ENCODE measurements at regions of chr2 and their contacts with region 1.

Region 1: DNA sequence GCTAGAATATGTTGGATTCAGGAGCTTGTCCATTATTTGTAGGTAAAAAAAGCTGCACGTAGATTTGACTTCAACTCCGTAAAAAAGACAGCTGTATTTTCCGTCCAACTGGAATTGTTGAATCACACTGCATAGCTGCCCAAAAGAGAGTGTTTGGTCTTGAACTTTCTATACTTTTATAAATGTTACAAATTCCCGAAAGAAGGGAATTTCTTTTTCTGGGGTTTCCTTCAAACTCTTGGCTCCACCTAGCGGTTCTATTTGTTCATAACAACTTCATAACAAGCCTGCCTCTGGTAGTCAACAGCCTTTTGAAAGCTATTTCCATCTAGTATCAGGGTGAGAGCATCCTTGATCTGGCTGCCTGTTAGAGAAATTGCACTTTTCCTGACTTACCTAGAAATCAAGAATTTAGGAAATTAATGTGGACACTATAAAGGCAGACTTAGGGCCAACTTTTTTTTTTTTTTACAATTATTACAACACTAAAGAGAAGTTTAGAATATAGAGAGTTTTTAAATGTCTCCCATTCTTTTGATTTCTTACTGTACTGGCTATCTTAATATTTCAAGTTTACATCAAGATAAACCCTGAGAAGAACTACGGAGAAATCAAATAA is 48.1 kb downstream of the TMEM185B start:
- DNase-seq: peak; percentile 45 to 55 (median 50)
- H3K4me3 ChIP-seq: no peak overlapping the region
- H3K4me3 Mint-ChIP-seq: peak overlapping the region in 3 of 8 donors; percentile 4 to 69 (median 11)
- H3K27ac ChIP-seq: no peak overlapping the region
- H3K27ac Mint-ChIP-seq: peak overlapping the region in 6 of 7 donors; percentile 17 to 95 (median 58)
- H3K4me1 ChIP-seq: peaks cover 48% of the 10 kb centered on the region
- H3K4me1 Mint-ChIP-seq: peaks cover 23 to 51% (median 38%) of the 10 kb centered on the region in 4 donors
- H3K27me3 ChIP-seq: no peaks in the 10 kb centered on the region
- H3K27me3 Mint-ChIP-seq: no peaks in the 10 kb centered on the region

Region 2: DNA sequence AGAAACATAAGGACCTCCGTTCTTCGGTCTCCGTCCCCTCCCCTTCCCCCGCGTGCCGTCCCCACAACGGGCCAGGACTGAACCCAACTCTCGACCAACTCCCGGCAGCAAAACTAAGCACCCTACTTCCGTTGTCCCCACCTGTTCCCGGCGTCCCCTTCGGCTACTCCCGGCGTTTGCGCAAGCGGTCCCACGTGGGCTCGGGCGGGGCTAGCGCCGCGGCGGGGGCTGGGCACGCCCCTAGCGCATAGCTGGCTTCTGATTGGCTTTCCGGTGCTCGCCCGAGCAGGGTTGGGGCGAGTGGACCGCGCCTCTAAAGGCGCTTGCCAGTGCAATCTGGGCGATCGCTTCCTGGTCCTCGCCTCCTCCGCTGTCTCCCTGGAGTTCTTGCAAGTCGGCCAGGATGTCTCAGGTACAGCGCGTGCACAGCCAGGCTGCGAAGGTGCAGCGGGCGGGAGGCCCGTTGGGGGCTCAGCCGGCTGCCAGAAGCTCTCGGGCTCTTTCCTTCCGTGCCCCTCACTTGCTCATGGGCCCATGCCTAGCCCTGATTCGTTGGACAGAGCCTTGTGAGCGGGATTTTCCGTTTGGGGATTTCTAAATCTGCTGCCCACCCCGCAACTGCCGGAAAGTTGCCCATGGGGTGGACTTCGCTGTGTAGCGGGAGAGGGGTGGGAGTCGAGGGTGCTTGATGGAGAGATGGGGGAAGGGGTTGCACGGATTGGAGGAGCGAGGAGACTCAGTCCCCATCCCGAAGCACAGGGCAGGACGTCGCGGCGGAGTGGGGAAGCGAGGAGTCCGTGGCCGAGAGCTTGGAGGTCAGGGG is 808.2 kb before region 1 on chr2 and contains the starts of genes C2orf76 and DBI:
- CTCF ChIA-PET with region 1: interaction called, 3 read pairs
- POLR2A ChIA-PET with region 1: interaction called, 3 read pairs
- intact Hi-C with region 1: loop called (anchors 5 kb)
- DNase-seq: peak; percentile 89 to 90 (median 89)
- H3K4me3 ChIP-seq: peak within 1 kb of the TSS; percentile 95 to 97
- H3K4me3 Mint-ChIP-seq: peak within 1 kb of the TSS; percentile 94 to 99 (median 96)
- H3K27ac ChIP-seq: peak within 1 kb of the TSS; percentile 92
- H3K27ac Mint-ChIP-seq: peak within 1 kb of the TSS; percentile 89 to 98 (median 94)
- H3K4me1 ChIP-seq: peaks cover 31% of the 10 kb centered on the region
- H3K4me1 Mint-ChIP-seq: peaks cover 32 to 52% (median 40%) of the 10 kb centered on the region in 4 donors
- H3K27me3 ChIP-seq: no peaks in the 10 kb centered on the region
- H3K27me3 Mint-ChIP-seq: no peaks in the 10 kb centered on the region
- total RNA-seq, gene C2orf76: 8.8 to 9.6 TPM
- total RNA-seq, gene DBI: 44.7 to 51.5 TPM

Region 3: DNA sequence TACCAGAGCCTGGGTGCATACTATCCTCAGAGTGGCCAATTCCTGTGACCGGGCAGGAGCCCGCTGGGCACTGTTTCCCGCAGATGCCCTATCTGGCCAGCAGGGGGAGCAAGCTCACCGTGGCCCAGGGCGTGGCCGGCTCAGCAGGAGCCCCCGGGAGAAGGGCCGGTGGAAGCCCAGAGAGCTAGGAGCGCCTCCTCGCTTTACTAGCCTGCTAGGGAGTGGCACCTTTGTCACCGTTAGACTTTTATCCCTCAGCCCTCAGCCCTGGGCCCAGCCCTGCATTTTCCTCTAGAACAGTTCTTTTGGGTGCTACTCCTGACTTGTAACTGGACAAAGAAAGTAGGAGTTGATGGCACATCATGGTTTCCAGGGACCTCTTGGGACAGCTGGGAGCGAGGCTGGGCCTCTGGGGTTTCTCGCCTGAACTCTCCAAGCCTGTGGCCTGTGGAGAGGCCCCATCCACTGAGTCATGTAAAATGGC is 472.1 kb before region 1 on chr2:
- CTCF ChIA-PET with region 1: interaction called, 84 read pairs
- POLR2A ChIA-PET with region 1: interaction called, 4 read pairs
- intact Hi-C with region 1: loop called (anchors 1 kb)
- DNase-seq: peak in 4 of 5 donors; percentile 55 to 69 (median 60)
- H3K4me3 ChIP-seq: no peak overlapping the region
- H3K4me3 Mint-ChIP-seq: peak overlapping the region in 2 of 8 donors; percentile 15 to 20
- H3K27ac ChIP-seq: no peak overlapping the region
- H3K27ac Mint-ChIP-seq: peak overlapping the region in 2 of 7 donors; percentile 22 to 64
- H3K4me1 ChIP-seq: peaks cover 20% of the 10 kb centered on the region
- H3K4me1 Mint-ChIP-seq: peaks cover 1 to 23% (median 13%) of the 10 kb centered on the region in 4 donors
- H3K27me3 ChIP-seq: no peaks in the 10 kb centered on the region
- H3K27me3 Mint-ChIP-seq: no peaks in the 10 kb centered on the region

Region 4: DNA sequence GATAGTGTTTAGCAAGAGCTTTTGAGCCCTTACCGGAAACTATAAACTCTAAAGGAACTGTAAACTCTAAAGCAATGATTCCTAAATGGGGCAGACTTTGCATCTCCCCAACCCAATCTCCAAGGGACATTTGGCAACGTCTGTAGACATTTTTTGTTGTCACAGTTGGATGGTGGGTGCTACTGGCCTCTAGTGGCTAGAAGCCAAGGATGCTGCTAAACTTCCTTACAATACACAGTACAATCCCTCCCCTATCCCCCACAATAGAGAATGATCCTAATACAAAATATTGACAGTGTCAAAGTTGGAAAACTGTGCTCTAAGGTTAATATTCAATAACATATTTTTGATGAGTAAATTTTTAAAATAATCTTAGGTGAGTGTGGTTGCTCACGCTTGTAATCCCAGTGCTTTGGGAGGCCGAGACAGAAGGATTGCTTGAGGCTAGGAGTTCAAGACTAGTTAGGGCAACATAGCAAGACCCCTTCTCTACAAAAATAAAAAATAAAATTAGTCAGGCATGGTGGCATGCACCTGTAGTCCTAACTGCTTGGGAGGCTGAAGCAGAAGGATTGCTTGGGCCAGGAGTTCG is 348.6 kb before region 1 on chr2:
- CTCF ChIA-PET with region 1: interaction called, 3 read pairs
- POLR2A ChIA-PET with region 1: interaction called, 3 read pairs
- intact Hi-C with region 1: loop called (anchors 2 kb)
- DNase-seq: peak in 4 of 5 donors; percentile 38 to 49 (median 41)
- H3K4me3 ChIP-seq: no peak overlapping the region
- H3K4me3 Mint-ChIP-seq: no peak overlapping the region
- H3K27ac ChIP-seq: no peak overlapping the region
- H3K27ac Mint-ChIP-seq: peak overlapping the region in 2 of 7 donors; percentile 31 to 32
- H3K4me1 ChIP-seq: peaks cover 5% of the 10 kb centered on the region
- H3K4me1 Mint-ChIP-seq: peaks cover 27 to 54% (median 44%) of the 10 kb centered on the region in 4 donors
- H3K27me3 ChIP-seq: no peaks in the 10 kb centered on the region
- H3K27me3 Mint-ChIP-seq: no peaks in the 10 kb centered on the region

Region 5: DNA sequence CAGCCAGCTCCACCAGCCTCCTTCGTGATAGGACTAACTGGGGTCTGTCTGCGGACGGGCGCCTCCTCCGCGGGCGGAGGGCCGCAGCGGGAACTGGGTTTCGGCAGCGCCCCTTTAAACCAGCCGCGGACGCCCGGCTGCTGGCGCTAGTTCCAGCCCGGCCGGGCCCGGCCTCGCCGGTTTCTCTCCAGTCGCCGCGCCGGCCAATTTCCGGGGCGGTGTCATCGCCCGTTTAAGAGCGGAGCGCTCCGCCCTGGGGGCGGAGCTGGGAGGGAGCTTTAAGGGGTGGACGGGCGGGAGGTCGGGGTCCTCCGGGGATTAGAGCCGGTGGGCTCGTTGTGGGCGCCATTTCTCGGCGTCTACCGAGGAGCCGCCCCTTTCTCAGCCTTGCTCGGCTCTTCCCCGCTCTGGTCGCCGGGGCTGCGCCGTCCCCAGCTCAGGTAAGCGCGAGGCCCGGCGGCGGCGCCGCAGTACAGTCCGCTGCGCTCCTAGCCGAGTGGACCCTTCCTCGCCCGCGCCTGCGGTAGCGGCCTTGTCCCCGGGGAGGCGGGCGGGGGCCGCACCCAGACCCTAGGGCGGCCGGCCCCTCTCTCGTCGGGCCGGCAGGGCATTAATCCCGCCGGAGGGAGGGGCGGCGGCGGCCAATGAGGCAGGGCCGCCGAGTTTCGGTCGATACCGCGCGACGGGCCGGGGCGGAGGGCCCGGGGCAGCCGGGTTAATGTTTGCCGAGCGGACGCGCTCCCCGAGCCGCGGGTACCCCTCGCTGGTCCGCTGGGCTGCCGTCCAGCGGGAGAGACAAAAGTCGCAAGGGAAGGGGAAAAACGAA is 162.1 kb before region 1 on chr2 and contains the start of gene EPB41L5:
- CTCF ChIA-PET with region 1: interaction called, 7 read pairs
- POLR2A ChIA-PET with region 1: interaction called, 19 read pairs
- intact Hi-C with region 1: loop called (anchors 2 kb)
- DNase-seq: peak; percentile 63 to 74 (median 67)
- H3K4me3 ChIP-seq: peak within 1 kb of the TSS; percentile 52 to 76
- H3K4me3 Mint-ChIP-seq: peak within 1 kb of the TSS; percentile 82 to 87 (median 84)
- H3K27ac ChIP-seq: peak within 1 kb of the TSS; percentile 55
- H3K27ac Mint-ChIP-seq: peak within 1 kb of the TSS; percentile 0 to 86 (median 70)
- H3K4me1 ChIP-seq: peaks cover 15% of the 10 kb centered on the region
- H3K4me1 Mint-ChIP-seq: peaks cover 13 to 20% (median 15%) of the 10 kb centered on the region in 4 donors
- H3K27me3 ChIP-seq: no peaks in the 10 kb centered on the region
- H3K27me3 Mint-ChIP-seq: peaks cover 0 to 2% of the 10 kb centered on the region in 2 donors
- total RNA-seq, gene EPB41L5: 5.3 to 6.2 TPM

Region 6: DNA sequence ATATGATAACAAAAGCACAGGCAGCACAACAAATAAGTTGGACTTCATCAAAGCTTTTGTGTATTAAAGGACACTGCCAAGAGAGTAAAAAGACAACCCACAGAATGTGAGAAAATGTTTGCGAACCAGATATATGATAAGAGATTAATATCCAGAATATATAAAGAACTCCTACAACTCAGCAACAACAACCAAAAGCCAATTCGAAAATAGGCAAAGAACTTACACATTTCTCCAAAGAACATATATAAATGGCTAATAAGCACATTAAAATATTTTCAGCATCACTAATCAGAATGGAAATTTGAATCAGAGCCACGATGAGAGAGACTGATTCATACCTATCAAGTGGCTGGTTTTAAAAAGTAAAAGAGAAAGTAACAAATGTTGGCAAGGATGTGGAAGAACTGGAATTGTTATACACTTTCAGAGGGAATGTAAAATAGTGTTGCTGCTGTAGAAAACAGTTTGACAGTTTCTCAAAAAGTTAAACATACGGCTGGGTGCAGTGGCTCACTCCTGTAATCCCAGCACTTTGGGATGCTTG is 137.0 kb before region 1 on chr2:
- CTCF ChIA-PET with region 1: no interaction called
- POLR2A ChIA-PET with region 1: no interaction called
- intact Hi-C with region 1: no loop called
- DNase-seq: no peak
- H3K4me3 ChIP-seq: no peak overlapping the region
- H3K4me3 Mint-ChIP-seq: no peak overlapping the region
- H3K27ac ChIP-seq: no peak overlapping the region
- H3K27ac Mint-ChIP-seq: no peak overlapping the region
- H3K4me1 ChIP-seq: no peaks in the 10 kb centered on the region
- H3K4me1 Mint-ChIP-seq: peaks cover 0 to 3% (median under 1%) of the 10 kb centered on the region in 4 donors
- H3K27me3 ChIP-seq: no peaks in the 10 kb centered on the region
- H3K27me3 Mint-ChIP-seq: no peaks in the 10 kb centered on the region

Region 7: DNA sequence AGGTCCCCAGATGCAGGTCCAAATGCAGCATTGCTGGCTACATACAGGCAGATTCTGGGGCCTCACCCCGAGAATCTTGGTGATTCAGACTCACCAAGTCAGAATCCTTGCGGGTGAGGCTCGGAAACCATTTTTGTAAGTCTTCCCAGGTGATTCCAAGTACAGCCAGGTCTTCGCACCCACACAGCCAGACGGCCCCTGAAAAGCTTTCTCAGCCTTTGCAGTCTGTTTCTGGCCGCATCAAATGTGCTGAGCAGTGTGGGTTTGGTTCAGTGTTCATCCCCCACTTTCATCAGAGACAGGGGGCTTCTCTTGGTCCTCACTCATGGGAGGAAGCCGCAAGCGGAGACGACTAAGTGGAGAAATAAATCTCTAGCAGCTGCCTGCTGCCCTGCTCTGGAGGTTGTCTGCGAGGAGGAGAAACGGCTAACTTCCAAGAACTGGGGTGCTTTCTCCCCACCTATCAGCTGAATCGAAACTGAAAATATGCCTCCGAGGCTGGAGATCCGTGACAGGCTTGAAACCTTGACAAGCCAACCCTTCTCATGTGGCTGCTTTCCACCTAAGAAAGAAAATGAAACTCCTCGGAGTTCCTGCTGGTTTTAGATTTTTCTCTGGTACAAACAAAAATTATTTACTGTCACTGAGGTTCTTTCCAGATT is 57.0 kb after region 1 on chr2:
- CTCF ChIA-PET with region 1: interaction called, 30 read pairs
- POLR2A ChIA-PET with region 1: interaction called, 33 read pairs
- intact Hi-C with region 1: loop called (anchors 1 kb)
- DNase-seq: peak; percentile 75 to 83 (median 79)
- H3K4me3 ChIP-seq: peak overlapping the region; percentile 69 to 91
- H3K4me3 Mint-ChIP-seq: peak overlapping the region; percentile 91 to 99 (median 92)
- H3K27ac ChIP-seq: peak overlapping the region; percentile 79
- H3K27ac Mint-ChIP-seq: peak overlapping the region; percentile 91 to 99 (median 96)
- H3K4me1 ChIP-seq: peaks cover 46% of the 10 kb centered on the region
- H3K4me1 Mint-ChIP-seq: peaks cover 27 to 61% (median 42%) of the 10 kb centered on the region in 4 donors
- H3K27me3 ChIP-seq: no peaks in the 10 kb centered on the region
- H3K27me3 Mint-ChIP-seq: no peaks in the 10 kb centered on the region

Measured in CD4-positive, alpha-beta memory T cell (primary cell).